K562 (cell line): ENCODE measurements at regions of chr21 and their contacts with region 1.

Region 1: GRCh38 chr21:36976882-36977651 is 10.6 kb upstream of the HLCS start:
- DNase-seq: peak; percentile 61 to 87 (median 66)
- ATAC-seq: peak; percentile 83
- H3K4me3 ChIP-seq: no peak overlapping the region
- H3K27ac ChIP-seq: no peak overlapping the region
- H3K4me1 ChIP-seq: peaks cover 16 to 20% of the 10 kb centered on the region in 2 experiments
- H3K27me3 ChIP-seq: no peaks in the 10 kb centered on the region
- CTCF ChIP-seq: peak; percentile 98 to 100 (median 99)
- EP300 ChIP-seq: peak; percentile 42; the same call in 1 of the 2 replicates
- POLR2A ChIP-seq: no peak
- RAD21 ChIP-seq: peak; percentile 91 to 96

Region 2: GRCh38 chr21:36929622-36930021 is 47.4 kb before region 1 on chr21:
- CTCF ChIA-PET with region 1: no interaction called
- POLR2A ChIA-PET with region 1: no interaction called
- in situ Hi-C with region 1: no loop called
- intact Hi-C with region 1: no loop called
- DNase-seq: no peak
- ATAC-seq: no peak
- H3K4me3 ChIP-seq: no peak overlapping the region
- H3K27ac ChIP-seq: no peak overlapping the region
- H3K4me1 ChIP-seq: no peaks in the 10 kb centered on the region
- H3K27me3 ChIP-seq: no peaks in the 10 kb centered on the region
- CTCF ChIP-seq: peak; percentile 19 to 47 (median 39); a peak in 3 of 6 replicates
- EP300 ChIP-seq: no peak
- POLR2A ChIP-seq: no peak
- RAD21 ChIP-seq: peak in 1 of 2 experiments; percentile 41; a peak in 2 of 4 replicates

Region 3: GRCh38 chr21:36989699-36990507 is 12.8 kb after region 1 on chr21:
- CTCF ChIA-PET with region 1: interaction called, 11 read pairs
- POLR2A ChIA-PET with region 1: interaction called, 8 read pairs
- in situ Hi-C with region 1: no loop called
- intact Hi-C with region 1: no loop called
- DNase-seq: peak; percentile 98 to 99 (median 99)
- ATAC-seq: peak; percentile 97
- H3K4me3 ChIP-seq: peak overlapping the region; percentile 62
- H3K27ac ChIP-seq: peak overlapping the region; percentile 93
- H3K4me1 ChIP-seq: peaks cover 7 to 23% of the 10 kb centered on the region in 2 experiments
- H3K27me3 ChIP-seq: no peaks in the 10 kb centered on the region
- CTCF ChIP-seq: peak; percentile 65 to 91 (median 82)
- EP300 ChIP-seq: 0 out of 2 replicates have a peak, but pooled peaks have one; percentile 4
- POLR2A ChIP-seq: peak; percentile 92
- RAD21 ChIP-seq: peak; percentile 55 to 66

Region 4: DNA sequence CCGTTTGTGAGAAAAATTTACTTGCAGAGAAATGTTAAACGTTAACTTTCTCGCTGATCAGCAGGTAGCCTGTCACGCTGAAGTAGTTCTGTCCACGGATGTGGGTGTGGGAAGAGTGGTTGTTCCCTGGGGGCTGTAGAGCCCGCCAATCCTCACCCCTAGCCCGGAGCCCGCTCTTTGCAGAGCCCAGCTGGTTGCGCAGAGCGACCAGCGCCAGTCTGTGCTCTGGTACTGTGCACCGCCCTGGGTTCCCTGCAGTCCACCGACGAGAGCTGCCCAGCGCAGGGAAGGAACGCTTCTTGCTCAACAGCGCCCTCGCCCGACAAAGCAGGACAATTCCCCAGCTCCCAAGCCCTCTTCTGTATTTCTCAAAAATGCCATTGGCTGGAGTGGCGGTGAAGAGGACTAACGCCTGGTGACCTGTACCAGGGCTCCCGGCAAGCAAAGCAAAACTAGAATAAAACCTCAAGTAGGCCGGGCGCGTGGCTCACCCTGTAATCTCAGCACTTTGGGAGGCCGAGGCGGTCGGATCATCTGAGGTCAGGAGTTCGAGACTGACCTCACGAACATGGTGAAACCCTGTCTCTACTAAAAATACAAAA is 32.8 kb after region 1 on chr21:
- CTCF ChIA-PET with region 1: interaction called, 18 read pairs
- POLR2A ChIA-PET with region 1: no interaction called
- in situ Hi-C with region 1: no loop called
- intact Hi-C with region 1: loop called (anchors 1 kb)
- DNase-seq: peak; percentile 86 to 93 (median 90)
- ATAC-seq: peak; percentile 100
- H3K4me3 ChIP-seq: peak overlapping the region; percentile 39
- H3K27ac ChIP-seq: no peak overlapping the region; the same call in 2 of the 3 replicates
- H3K4me1 ChIP-seq: peaks cover 10 to 13% of the 10 kb centered on the region in 2 experiments; a peak in 4 of 5 replicates
- H3K27me3 ChIP-seq: peaks cover 2 to 4% of the 10 kb centered on the region in 2 experiments; a peak in 1 of 5 replicates
- CTCF ChIP-seq: peak; percentile 97 to 99 (median 98)
- EP300 ChIP-seq: 0 out of 2 replicates have a peak, but pooled peaks have one; percentile 15
- POLR2A ChIP-seq: no peak
- RAD21 ChIP-seq: peak; percentile 71 to 88

Region 5: DNA sequence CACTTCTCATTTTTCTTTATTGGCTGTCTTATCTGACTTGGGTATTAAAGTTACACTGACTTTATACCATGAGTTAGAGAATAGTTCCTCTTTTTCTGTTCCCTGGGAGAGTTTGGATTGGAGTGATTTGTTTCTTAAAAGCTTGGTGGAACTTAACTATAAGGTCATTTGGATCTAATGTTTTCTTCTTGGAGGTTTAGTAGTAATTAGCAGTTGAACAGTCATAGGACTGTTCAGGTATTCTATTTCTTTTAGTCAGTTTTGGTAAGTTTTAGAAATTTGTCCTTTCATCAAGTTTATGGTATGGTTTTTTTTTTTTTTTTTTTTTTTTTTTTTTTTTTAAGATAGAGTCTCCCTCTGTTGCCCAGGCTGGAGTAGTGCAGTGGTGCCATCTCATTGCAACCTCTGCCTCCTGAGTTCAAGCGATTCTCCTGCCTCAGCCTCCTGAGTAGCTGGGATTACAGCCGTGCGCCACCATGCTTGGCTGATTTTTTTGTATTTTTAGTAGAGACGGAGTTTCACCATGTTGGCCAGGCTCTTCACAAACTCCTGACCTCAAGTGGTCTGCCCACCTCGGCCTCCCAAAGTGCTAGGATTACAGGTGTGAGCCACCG is 102.3 kb after region 1 on chr21:
- CTCF ChIA-PET with region 1: interaction called, 12 read pairs
- POLR2A ChIA-PET with region 1: interaction called, 3 read pairs
- in situ Hi-C with region 1: loop called (anchors 10 kb)
- intact Hi-C with region 1: loop called (anchors 2 kb)
- DNase-seq: peak in 1 of 4 experiments; percentile 55
- ATAC-seq: peak; percentile 82
- H3K4me3 ChIP-seq: no peak overlapping the region
- H3K27ac ChIP-seq: peak overlapping the region; percentile 33; the same call in 1 of the 3 replicates
- H3K4me1 ChIP-seq: peaks cover 0 to 13% of the 10 kb centered on the region in 2 experiments; a peak in 3 of 5 replicates
- H3K27me3 ChIP-seq: no peaks in the 10 kb centered on the region
- CTCF ChIP-seq: peak; percentile 53 to 65 (median 56)
- EP300 ChIP-seq: no peak
- POLR2A ChIP-seq: no peak
- RAD21 ChIP-seq: peak in 1 of 2 experiments; percentile 19; a peak in 2 of 4 replicates

Region 6: GRCh38 chr21:37087188-37087587 is 110.1 kb after region 1 on chr21:
- CTCF ChIA-PET with region 1: interaction called, 35 read pairs
- POLR2A ChIA-PET with region 1: interaction called, 4 read pairs
- in situ Hi-C with region 1: loop called (anchors 10 kb)
- intact Hi-C with region 1: loop called (anchors 1 kb)
- DNase-seq: peak in 2 of 4 experiments; percentile 28 to 79
- ATAC-seq: peak; percentile 94
- H3K4me3 ChIP-seq: no peak overlapping the region
- H3K27ac ChIP-seq: peak overlapping the region; percentile 35
- H3K4me1 ChIP-seq: peaks cover 7 to 32% of the 10 kb centered on the region in 2 experiments; a peak in 4 of 5 replicates
- H3K27me3 ChIP-seq: no peaks in the 10 kb centered on the region
- CTCF ChIP-seq: peak; percentile 75 to 88 (median 77)
- EP300 ChIP-seq: peak; percentile 37
- POLR2A ChIP-seq: no peak
- RAD21 ChIP-seq: peak; percentile 67 to 86